Left cardiac atrium (tissue), 4 donors: ENCODE measurements at regions of chr9 and their contacts with region 1.

Region 1: GRCh38 chr9:32703635-32704034 is 68.2 kb upstream of the TAF1L start:
- DNase-seq: no peak
- ATAC-seq: no peak

Region 2: DNA sequence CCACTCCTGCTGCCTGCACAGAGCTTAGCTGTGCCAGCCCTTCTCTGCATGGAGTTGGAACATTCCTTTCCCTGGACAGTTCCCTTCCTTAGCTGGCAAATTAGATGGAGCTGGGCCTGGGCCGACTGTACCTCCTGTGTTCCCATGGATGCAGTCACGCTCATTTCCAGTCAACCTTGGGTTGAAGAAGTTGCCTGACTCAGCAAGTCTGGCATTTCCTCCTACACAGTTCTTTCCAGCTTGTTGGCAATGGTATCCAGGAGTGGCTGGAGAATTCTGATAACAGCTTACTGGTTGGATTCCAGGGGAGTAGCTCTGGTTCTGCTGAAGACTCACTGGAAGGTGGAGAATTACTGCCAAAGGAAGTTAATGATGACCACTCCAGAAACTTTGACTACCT is 58.9 kb before region 1 on chr9:
- intact Hi-C with region 1: loop called in 1 of 2 experiments (anchors 10 kb)
- DNase-seq: peak; percentile 44
- ATAC-seq: peak; percentile 70 to 99